H1 (cell line): ENCODE measurements at regions of chr11 and their contacts with region 1.

Region 1: GRCh38 chr11:32343325-32344008 is 91.9 kb downstream of the WT1 start:
- DNase-seq: no peak
- H3K4me3 ChIP-seq: no peak overlapping the region
- H3K27ac ChIP-seq: no peak overlapping the region
- H3K4me1 ChIP-seq: no peaks in the 10 kb centered on the region
- H3K27me3 ChIP-seq: no peaks in the 10 kb centered on the region
- CTCF ChIP-seq: no peak
- EP300 ChIP-seq: no peak
- POLR2A ChIP-seq: no peak
- RAD21 ChIP-seq: no peak

Region 2: GRCh38 chr11:32323814-32324130 is 19.7 kb before region 1 on chr11:
- CTCF ChIA-PET with region 1: interaction called, 125 read pairs
- POLR2A ChIA-PET with region 1: no interaction called
- DNase-seq: no peak
- H3K4me3 ChIP-seq: no peak overlapping the region
- H3K27ac ChIP-seq: no peak overlapping the region
- H3K4me1 ChIP-seq: no peaks in the 10 kb centered on the region
- H3K27me3 ChIP-seq: no peaks in the 10 kb centered on the region
- CTCF ChIP-seq: no peak
- EP300 ChIP-seq: no peak
- POLR2A ChIP-seq: no peak
- RAD21 ChIP-seq: no peak

Region 3: DNA sequence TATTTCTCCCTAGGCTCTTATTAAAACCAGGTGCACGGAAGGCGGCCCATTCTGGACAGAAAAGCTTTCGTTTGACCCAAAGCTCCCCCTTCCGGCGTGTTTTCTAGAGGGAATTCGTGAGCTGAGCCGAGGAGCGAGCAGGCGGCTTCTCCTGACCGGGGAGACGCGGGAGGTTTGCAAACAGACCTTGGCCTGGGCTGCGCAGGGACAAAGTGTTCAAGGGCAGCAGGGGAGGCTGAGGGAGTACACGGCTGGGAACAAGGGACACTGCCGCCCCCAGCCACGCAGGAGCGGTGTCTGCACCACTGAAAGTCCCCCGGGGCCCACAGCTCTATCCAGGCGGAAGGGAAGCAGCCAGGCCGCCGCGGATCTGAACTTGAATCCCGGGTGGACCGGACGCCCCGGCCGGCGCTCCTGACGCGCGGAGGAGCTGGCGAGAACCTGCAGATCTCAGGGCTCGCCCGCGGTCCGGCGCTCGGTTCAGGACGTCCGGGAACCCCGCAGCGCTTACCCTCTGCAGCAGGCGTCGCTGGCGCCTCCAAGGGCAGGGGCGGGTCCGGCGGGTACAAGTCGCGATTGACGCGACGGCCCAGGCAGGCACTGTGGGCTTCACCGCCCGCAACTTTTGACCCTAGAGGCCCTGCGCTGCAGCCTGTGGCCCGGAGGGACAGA is 10.0 kb before region 1 on chr11:
- CTCF ChIA-PET with region 1: interaction called, 30 read pairs
- POLR2A ChIA-PET with region 1: no interaction called
- DNase-seq: peak; percentile 38 to 84
- H3K4me3 ChIP-seq: peak overlapping the region; percentile 40 to 65 (median 54)
- H3K27ac ChIP-seq: no peak overlapping the region
- H3K4me1 ChIP-seq: peaks cover 2 to 7% (median 5%) of the 10 kb centered on the region in 4 experiments; a peak in 3 of 7 replicates
- H3K27me3 ChIP-seq: peaks cover 0 to 28% (median 19%) of the 10 kb centered on the region in 4 experiments; a peak in 6 of 7 replicates
- CTCF ChIP-seq: peak; percentile 25 to 45 (median 40)
- EP300 ChIP-seq: no peak
- POLR2A ChIP-seq: 0 out of 3 replicates have a peak, but pooled peaks of 1 of the 2 experiments have one; percentile 25
- RAD21 ChIP-seq: peak in 1 of 2 experiments; percentile 31; a peak in 1 of 4 replicates